CD4-positive, alpha-beta memory T cell (primary cell): ENCODE measurements at regions of chr13 and their contacts with region 1.

Region 1: GRCh38 chr13:76886292-76887075 is at the start of gene KCTD12:
- DNase-seq: peak; percentile 65 to 80 (median 70)
- H3K4me3 ChIP-seq: peak within 1 kb of the TSS; percentile 29 to 80
- H3K4me3 Mint-ChIP-seq: peak within 1 kb of the TSS; percentile 86 to 92 (median 88)
- H3K27ac ChIP-seq: peak within 1 kb of the TSS; percentile 27
- H3K27ac Mint-ChIP-seq: peak within 1 kb of the TSS in 6 of 7 donors; percentile 32 to 87 (median 70)
- H3K4me1 ChIP-seq: peaks cover 16% of the 10 kb centered on the region
- H3K4me1 Mint-ChIP-seq: peaks cover 15 to 46% (median 25%) of the 10 kb centered on the region in 4 donors
- H3K27me3 ChIP-seq: no peaks in the 10 kb centered on the region
- H3K27me3 Mint-ChIP-seq: peaks cover 2 to 5% of the 10 kb centered on the region in 2 donors
- total RNA-seq, gene KCTD12: 9.3 to 9.6 TPM

Region 2: DNA sequence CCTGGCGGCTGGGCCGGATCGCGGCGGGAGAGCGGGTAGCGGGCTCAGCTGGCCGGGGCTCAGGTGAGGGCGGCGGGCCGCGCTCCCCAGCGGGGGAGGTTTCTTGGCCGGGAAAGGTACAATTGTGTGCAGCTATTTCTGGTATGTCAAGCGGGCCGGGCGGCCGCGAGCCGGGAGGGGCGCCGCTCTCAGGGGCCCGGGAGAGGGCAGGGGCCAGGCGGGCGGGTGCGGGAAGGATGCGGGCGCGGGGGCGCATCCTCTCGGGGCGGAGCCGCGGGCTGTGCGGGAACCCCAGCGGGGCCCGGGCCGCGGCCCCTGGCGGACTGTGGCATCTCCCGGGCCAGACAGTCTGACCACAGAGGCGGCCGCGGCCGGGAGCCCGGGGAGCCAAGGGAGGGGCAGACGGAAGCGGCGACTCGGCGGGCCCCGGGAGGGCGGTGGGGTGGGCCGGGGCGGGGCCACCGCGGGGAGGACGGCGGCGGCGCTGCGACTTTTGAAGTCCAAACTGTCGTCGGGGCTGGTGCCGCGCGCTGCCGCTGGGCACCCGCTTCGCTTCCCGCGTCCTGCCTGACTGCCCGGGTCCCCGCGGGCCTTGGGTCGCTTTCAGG is 1250.6 kb before region 1 on chr13 and contains the start of gene LMO7:
- CTCF ChIA-PET with region 1: no interaction called
- POLR2A ChIA-PET with region 1: interaction called, 7 read pairs
- intact Hi-C with region 1: loop called (anchors 1 kb)
- DNase-seq: peak; percentile 51 to 65 (median 55)
- H3K4me3 ChIP-seq: peak within 1 kb of the TSS; percentile 59 to 70
- H3K4me3 Mint-ChIP-seq: peak within 1 kb of the TSS; percentile 82 to 90 (median 86)
- H3K27ac ChIP-seq: peak within 1 kb of the TSS; percentile 31
- H3K27ac Mint-ChIP-seq: peak within 1 kb of the TSS; percentile 47 to 88 (median 74)
- H3K4me1 ChIP-seq: peaks cover 6% of the 10 kb centered on the region
- H3K4me1 Mint-ChIP-seq: peaks cover 12 to 19% (median 14%) of the 10 kb centered on the region in 4 donors
- H3K27me3 ChIP-seq: no peaks in the 10 kb centered on the region
- H3K27me3 Mint-ChIP-seq: peaks cover 0 to 4% of the 10 kb centered on the region in 2 donors
- total RNA-seq, gene LMO7: 25.7 to 29.4 TPM

Region 3: GRCh38 chr13:76822698-76823267 is 63.7 kb before region 1 on chr13:
- CTCF ChIA-PET with region 1: interaction called, 24 read pairs
- POLR2A ChIA-PET with region 1: interaction called, 6 read pairs
- intact Hi-C with region 1: loop called (anchors 1 kb)
- DNase-seq: peak in 3 of 5 donors; percentile 3 to 29 (median 15)
- H3K4me3 ChIP-seq: no peak overlapping the region
- H3K4me3 Mint-ChIP-seq: no peak overlapping the region
- H3K27ac ChIP-seq: no peak overlapping the region
- H3K27ac Mint-ChIP-seq: no peak overlapping the region
- H3K4me1 ChIP-seq: no peaks in the 10 kb centered on the region
- H3K4me1 Mint-ChIP-seq: no peaks in the 10 kb centered on the region
- H3K27me3 ChIP-seq: no peaks in the 10 kb centered on the region
- H3K27me3 Mint-ChIP-seq: peaks cover 4 to 9% of the 10 kb centered on the region in 2 donors

Region 4: GRCh38 chr13:76903544-76904162 is 17.2 kb after region 1 on chr13:
- CTCF ChIA-PET with region 1: interaction called, 28 read pairs
- POLR2A ChIA-PET with region 1: interaction called, 5 read pairs
- intact Hi-C with region 1: no loop called
- DNase-seq: peak; percentile 60 to 68 (median 64)
- H3K4me3 ChIP-seq: no peak overlapping the region
- H3K4me3 Mint-ChIP-seq: no peak overlapping the region
- H3K27ac ChIP-seq: no peak overlapping the region
- H3K27ac Mint-ChIP-seq: no peak overlapping the region
- H3K4me1 ChIP-seq: no peaks in the 10 kb centered on the region
- H3K4me1 Mint-ChIP-seq: no peaks in the 10 kb centered on the region
- H3K27me3 ChIP-seq: no peaks in the 10 kb centered on the region
- H3K27me3 Mint-ChIP-seq: peaks cover 10 to 12% of the 10 kb centered on the region in 2 donors

Region 5: GRCh38 chr13:77026818-77027585 is 140.5 kb after region 1 on chr13 and contains the start of gene FBXL3:
- CTCF ChIA-PET with region 1: no interaction called
- POLR2A ChIA-PET with region 1: interaction called, 18 read pairs
- intact Hi-C with region 1: no loop called
- DNase-seq: peak; percentile 83 to 87 (median 87)
- H3K4me3 ChIP-seq: peak within 1 kb of the TSS; percentile 66 to 86
- H3K4me3 Mint-ChIP-seq: peak within 1 kb of the TSS; percentile 96 to 100 (median 99)
- H3K27ac ChIP-seq: peak within 1 kb of the TSS; percentile 94
- H3K27ac Mint-ChIP-seq: peak within 1 kb of the TSS; percentile 80 to 99 (median 97)
- H3K4me1 ChIP-seq: peaks cover 48% of the 10 kb centered on the region
- H3K4me1 Mint-ChIP-seq: peaks cover 29 to 62% (median 46%) of the 10 kb centered on the region in 4 donors
- H3K27me3 ChIP-seq: no peaks in the 10 kb centered on the region
- H3K27me3 Mint-ChIP-seq: no peaks in the 10 kb centered on the region
- total RNA-seq, gene FBXL3: 94.2 to 96.2 TPM